Naive thymus-derived CD4-positive, alpha-beta T cell (primary cell): ENCODE measurements at regions of chr2 and their contacts with region 1.

Region 1: GRCh38 chr2:234288974-234289455 is 207.9 kb downstream of the ARL4C start:
- DNase-seq: peak; percentile 61 to 81 (median 70)
- ATAC-seq: peak; percentile 30
- H3K4me3 ChIP-seq: no peak overlapping the region
- H3K4me3 Mint-ChIP-seq: peak overlapping the region; percentile 10 to 87 (median 70)
- H3K27ac ChIP-seq: peak overlapping the region; percentile 94
- H3K27ac Mint-ChIP-seq: peak overlapping the region; percentile 92 to 100 (median 99)
- H3K4me1 ChIP-seq: peaks cover 56 to 63% of the 10 kb centered on the region in 2 donors
- H3K4me1 Mint-ChIP-seq: peaks cover 47 to 80% (median 68%) of the 10 kb centered on the region in 7 donors
- H3K27me3 ChIP-seq: no peaks in the 10 kb centered on the region
- H3K27me3 Mint-ChIP-seq: no peaks in the 10 kb centered on the region

Region 2: DNA sequence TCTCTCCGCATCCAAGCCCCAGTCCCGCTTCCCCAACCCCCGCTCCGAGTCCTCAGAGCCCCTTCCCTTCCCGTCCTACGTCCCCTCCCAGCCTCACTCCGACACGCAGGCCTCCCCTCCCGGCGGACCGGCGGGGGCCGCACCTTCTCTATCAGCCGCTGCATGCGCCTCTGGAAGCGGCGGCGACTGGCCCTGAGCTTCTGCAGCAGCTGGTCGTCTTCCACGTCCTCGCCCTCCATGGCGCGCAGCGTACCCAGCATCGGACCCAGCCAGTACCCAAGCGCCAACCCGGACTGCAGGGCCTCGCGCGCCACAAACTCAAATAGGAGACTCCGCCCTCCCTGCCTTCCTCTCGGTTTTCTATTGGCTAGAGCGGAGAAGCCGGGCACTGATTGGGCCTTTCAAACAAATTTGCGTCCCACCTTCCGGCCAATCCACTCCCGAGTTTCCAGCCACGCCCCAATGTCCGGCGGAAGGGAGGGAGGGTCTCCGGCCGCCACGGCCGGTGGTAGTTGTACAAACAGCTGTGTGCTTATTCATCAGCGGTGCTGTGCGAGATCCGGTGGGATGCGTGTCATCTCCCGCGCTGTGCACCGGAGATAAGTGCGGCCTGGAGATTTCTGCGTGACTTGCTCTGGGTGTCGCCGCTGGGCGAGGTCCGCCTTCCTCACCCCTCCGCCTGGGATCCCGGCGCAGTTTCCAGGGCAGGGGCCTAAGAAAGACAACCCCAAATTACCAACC is 434.6 kb before region 1 on chr2 and contains the start of gene HJURP:
- CTCF ChIA-PET with region 1: no interaction called
- POLR2A ChIA-PET with region 1: no interaction called
- intact Hi-C with region 1: loop called in 1 of 2 experiments (anchors 10 kb)
- DNase-seq: peak; percentile 76 to 92 (median 87)
- ATAC-seq: peak; percentile 96
- H3K4me3 ChIP-seq: peak within 1 kb of the TSS; percentile 97
- H3K4me3 Mint-ChIP-seq: peak within 1 kb of the TSS; percentile 83 to 98 (median 92)
- H3K27ac ChIP-seq: peak within 1 kb of the TSS; percentile 26
- H3K27ac Mint-ChIP-seq: peak within 1 kb of the TSS in 8 of 9 donors; percentile 53 to 95 (median 75)
- H3K4me1 ChIP-seq: peaks cover 0 to 6% of the 10 kb centered on the region in 2 donors
- H3K4me1 Mint-ChIP-seq: peaks cover 12 to 68% (median 18%) of the 10 kb centered on the region in 7 donors
- H3K27me3 ChIP-seq: no peaks in the 10 kb centered on the region
- H3K27me3 Mint-ChIP-seq: peaks cover 0 to 7% (median 5%) of the 10 kb centered on the region in 5 donors
- total RNA-seq, gene HJURP: 0.11 to 67.1 (median 0.27) TPM in 3 of 5 experiments, not detected in the others

Region 3: DNA sequence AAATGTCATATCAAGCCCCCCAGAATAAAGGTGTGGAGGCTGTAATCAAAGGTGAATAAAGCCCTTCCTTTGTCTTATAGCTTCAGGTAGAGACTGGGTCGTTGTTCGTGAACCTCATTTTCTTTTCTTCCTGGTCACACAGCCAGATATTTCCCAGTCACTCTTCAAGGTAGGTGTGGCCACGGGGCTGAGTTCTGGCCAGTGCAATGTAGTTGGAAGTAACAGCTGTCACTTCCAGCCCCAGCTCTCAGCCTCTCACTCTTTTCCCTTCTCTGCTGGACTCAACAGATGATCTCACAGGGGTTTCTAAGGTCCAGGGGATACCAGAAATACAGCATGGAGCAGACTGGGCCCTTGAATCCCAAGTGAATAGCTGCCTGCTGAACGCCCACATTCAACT is 387.6 kb before region 1 on chr2:
- CTCF ChIA-PET with region 1: no interaction called
- POLR2A ChIA-PET with region 1: no interaction called
- intact Hi-C with region 1: no loop called
- DNase-seq: no peak
- ATAC-seq: no peak
- H3K4me3 ChIP-seq: no peak overlapping the region
- H3K4me3 Mint-ChIP-seq: no peak overlapping the region
- H3K27ac ChIP-seq: no peak overlapping the region
- H3K27ac Mint-ChIP-seq: no peak overlapping the region
- H3K4me1 ChIP-seq: peaks cover 8 to 9% of the 10 kb centered on the region in 2 donors
- H3K4me1 Mint-ChIP-seq: peaks cover 0 to 21% (median 20%) of the 10 kb centered on the region in 7 donors
- H3K27me3 ChIP-seq: no peaks in the 10 kb centered on the region
- H3K27me3 Mint-ChIP-seq: peaks cover 12 to 24% (median 14%) of the 10 kb centered on the region in 5 donors

Region 4: DNA sequence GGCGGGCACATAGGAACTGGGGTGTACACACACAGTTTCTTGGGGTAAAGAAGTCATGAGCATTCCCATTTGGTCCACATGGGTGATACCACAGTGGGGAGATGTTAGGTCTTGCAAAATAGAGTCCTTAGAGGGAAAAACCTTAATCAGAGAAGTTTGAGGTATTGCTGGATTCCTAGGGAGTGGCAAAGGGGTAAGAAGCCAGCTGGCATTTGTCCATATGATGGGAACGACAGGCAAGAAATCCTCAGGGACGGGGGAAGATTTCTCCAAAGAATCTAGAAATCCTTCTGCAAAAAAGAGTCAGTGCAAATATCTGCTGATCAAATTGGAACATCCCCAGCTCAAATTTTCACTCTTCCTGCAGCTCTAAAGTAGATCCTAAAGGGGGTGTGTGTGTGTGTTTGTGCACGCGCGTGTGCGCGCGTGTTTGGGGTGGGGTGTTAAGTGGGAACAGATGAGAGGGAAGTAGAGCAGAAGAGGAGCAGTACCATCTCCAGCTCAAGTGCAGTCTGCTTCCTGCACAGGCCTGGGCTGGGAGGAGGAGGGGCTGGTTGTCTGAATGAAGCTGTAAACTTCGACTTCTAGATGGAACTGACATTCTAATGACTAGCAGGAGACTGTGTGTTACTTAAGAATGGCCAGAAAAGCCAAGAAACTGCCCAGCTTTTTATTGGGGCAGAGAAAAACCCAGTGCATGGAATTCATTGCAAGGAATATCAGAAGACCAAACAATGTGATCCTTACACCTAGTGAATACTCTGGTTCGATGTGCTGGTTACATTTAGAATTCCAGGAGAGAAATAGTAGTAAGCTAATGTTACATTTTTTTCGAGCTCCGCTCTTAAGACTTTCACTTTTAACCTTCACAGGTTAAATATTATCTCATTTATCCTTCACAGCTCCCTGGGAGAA is 70.5 kb before region 1 on chr2:
- CTCF ChIA-PET with region 1: no interaction called
- POLR2A ChIA-PET with region 1: no interaction called
- intact Hi-C with region 1: loop called in 1 of 2 experiments (anchors 5 kb)
- DNase-seq: peak in 5 of 9 donors; percentile 20 to 34 (median 30)
- ATAC-seq: peak; percentile 26
- H3K4me3 ChIP-seq: no peak overlapping the region
- H3K4me3 Mint-ChIP-seq: peak overlapping the region in 9 of 10 donors; percentile 29 to 76 (median 62)
- H3K27ac ChIP-seq: no peak overlapping the region
- H3K27ac Mint-ChIP-seq: peak overlapping the region in 6 of 9 donors; percentile 9 to 81 (median 34)
- H3K4me1 ChIP-seq: peaks cover 25 to 36% of the 10 kb centered on the region in 2 donors
- H3K4me1 Mint-ChIP-seq: peaks cover 26 to 59% (median 53%) of the 10 kb centered on the region in 7 donors
- H3K27me3 ChIP-seq: no peaks in the 10 kb centered on the region
- H3K27me3 Mint-ChIP-seq: no peaks in the 10 kb centered on the region

Region 5: GRCh38 chr2:234324116-234324515 is 35.1 kb after region 1 on chr2:
- CTCF ChIA-PET with region 1: no interaction called
- POLR2A ChIA-PET with region 1: interaction called, 3 read pairs
- intact Hi-C with region 1: loop called (anchors 1 kb)
- DNase-seq: no peak
- ATAC-seq: no peak
- H3K4me3 ChIP-seq: no peak overlapping the region
- H3K4me3 Mint-ChIP-seq: peak overlapping the region in 4 of 10 donors; percentile 5 to 52 (median 28)
- H3K27ac ChIP-seq: no peak overlapping the region
- H3K27ac Mint-ChIP-seq: peak overlapping the region; percentile 81 to 98 (median 89)
- H3K4me1 ChIP-seq: peaks cover 15 to 23% of the 10 kb centered on the region in 2 donors
- H3K4me1 Mint-ChIP-seq: peaks cover 21 to 76% (median 56%) of the 10 kb centered on the region in 7 donors
- H3K27me3 ChIP-seq: no peaks in the 10 kb centered on the region
- H3K27me3 Mint-ChIP-seq: no peaks in the 10 kb centered on the region

Region 6: GRCh38 chr2:234425619-234426603 is 136.9 kb after region 1 on chr2:
- CTCF ChIA-PET with region 1: interaction called, 15 read pairs
- POLR2A ChIA-PET with region 1: interaction called, 133 read pairs
- intact Hi-C with region 1: loop called (anchors 1 kb)
- DNase-seq: peak; percentile 53 to 93 (median 92)
- ATAC-seq: peak; percentile 84
- H3K4me3 ChIP-seq: peak overlapping the region; percentile 43
- H3K4me3 Mint-ChIP-seq: peak overlapping the region; percentile 73 to 87 (median 82)
- H3K27ac ChIP-seq: peak overlapping the region; percentile 93
- H3K27ac Mint-ChIP-seq: peak overlapping the region; percentile 97 to 100 (median 100)
- H3K4me1 ChIP-seq: peaks cover 86 to 92% of the 10 kb centered on the region in 2 donors
- H3K4me1 Mint-ChIP-seq: peaks cover 70 to 100% (median 91%) of the 10 kb centered on the region in 7 donors
- H3K27me3 ChIP-seq: no peaks in the 10 kb centered on the region
- H3K27me3 Mint-ChIP-seq: no peaks in the 10 kb centered on the region

Region 7: GRCh38 chr2:234483568-234484251 is 194.7 kb after region 1 on chr2:
- CTCF ChIA-PET with region 1: interaction called, 13 read pairs
- POLR2A ChIA-PET with region 1: interaction called, 29 read pairs
- intact Hi-C with region 1: loop called (anchors 1 kb)
- DNase-seq: peak; percentile 50 to 88 (median 80)
- ATAC-seq: peak; percentile 89
- H3K4me3 ChIP-seq: peak overlapping the region; percentile 28
- H3K4me3 Mint-ChIP-seq: peak overlapping the region; percentile 60 to 81 (median 67)
- H3K27ac ChIP-seq: peak overlapping the region; percentile 94
- H3K27ac Mint-ChIP-seq: peak overlapping the region; percentile 87 to 99 (median 95)
- H3K4me1 ChIP-seq: peaks cover 63 to 72% of the 10 kb centered on the region in 2 donors
- H3K4me1 Mint-ChIP-seq: peaks cover 44 to 95% (median 84%) of the 10 kb centered on the region in 7 donors
- H3K27me3 ChIP-seq: no peaks in the 10 kb centered on the region
- H3K27me3 Mint-ChIP-seq: no peaks in the 10 kb centered on the region